ENCODE measurements at regions of chr7 and their contacts with region 1.

Region 1: GRCh38 chr7:5557920-5558401 is 134.3 kb upstream of the TNRC18 start:
- DNase-seq: peak; percentile 57
- H3K4me3 Mint-ChIP-seq: peak overlapping the region; percentile 83
- H3K27ac Mint-ChIP-seq: peak overlapping the region; percentile 91
- H3K4me1 Mint-ChIP-seq: peaks cover 62% of the 10 kb centered on the region
- H3K27me3 Mint-ChIP-seq: peaks cover 54% of the 10 kb centered on the region

Region 2: GRCh38 chr7:5526100-5526905 is 31.7 kb before region 1 on chr7:
- CTCF ChIA-PET with region 1: interaction called, 39 read pairs
- DNase-seq: peak; percentile 37
- H3K4me3 Mint-ChIP-seq: peak overlapping the region; percentile 95
- H3K27ac Mint-ChIP-seq: peak overlapping the region; percentile 92
- H3K4me1 Mint-ChIP-seq: peaks cover 31% of the 10 kb centered on the region
- H3K27me3 Mint-ChIP-seq: peaks cover 20% of the 10 kb centered on the region

Region 3: DNA sequence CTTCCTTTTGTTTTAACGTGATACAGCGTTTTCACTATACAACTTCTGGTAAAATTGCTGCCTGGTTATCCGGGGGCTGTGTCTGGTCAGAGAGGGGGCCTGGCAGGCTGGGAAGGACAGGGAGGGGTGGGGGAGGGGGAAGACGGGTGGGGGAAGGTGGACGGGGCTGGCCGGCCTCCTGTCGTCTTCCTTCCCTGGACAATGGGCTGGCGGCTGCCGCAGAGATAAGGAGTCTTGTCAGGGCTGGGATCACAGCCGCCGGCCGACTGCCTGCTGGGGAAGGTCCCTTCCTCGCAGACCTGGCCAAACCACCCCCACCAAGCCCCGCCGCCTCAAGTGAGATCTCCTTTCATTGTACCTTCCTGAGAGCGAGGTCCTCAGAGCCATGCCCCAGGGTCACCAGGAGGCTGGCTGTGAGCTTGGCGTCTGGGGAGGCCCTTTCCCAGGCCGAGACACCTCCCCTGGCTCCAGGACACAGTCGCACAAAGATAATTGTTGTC is 16.9 kb after region 1 on chr7:
- CTCF ChIA-PET with region 1: no interaction called
- DNase-seq: no peak
- H3K4me3 Mint-ChIP-seq: no peak overlapping the region
- H3K27ac Mint-ChIP-seq: no peak overlapping the region
- H3K4me1 Mint-ChIP-seq: peaks cover 16% of the 10 kb centered on the region
- H3K27me3 Mint-ChIP-seq: peaks cover 67% of the 10 kb centered on the region

Measured in activated naive CD4-positive, alpha-beta T cell treated with anti-CD3 and anti-CD28 coated beads, Interleukin-2, amount 10 ng/mL, durations not matched to agents 7 days and 5 days (primary cell).